ENCODE measurements at regions of chr3 and their contacts with region 1.

Region 1: DNA sequence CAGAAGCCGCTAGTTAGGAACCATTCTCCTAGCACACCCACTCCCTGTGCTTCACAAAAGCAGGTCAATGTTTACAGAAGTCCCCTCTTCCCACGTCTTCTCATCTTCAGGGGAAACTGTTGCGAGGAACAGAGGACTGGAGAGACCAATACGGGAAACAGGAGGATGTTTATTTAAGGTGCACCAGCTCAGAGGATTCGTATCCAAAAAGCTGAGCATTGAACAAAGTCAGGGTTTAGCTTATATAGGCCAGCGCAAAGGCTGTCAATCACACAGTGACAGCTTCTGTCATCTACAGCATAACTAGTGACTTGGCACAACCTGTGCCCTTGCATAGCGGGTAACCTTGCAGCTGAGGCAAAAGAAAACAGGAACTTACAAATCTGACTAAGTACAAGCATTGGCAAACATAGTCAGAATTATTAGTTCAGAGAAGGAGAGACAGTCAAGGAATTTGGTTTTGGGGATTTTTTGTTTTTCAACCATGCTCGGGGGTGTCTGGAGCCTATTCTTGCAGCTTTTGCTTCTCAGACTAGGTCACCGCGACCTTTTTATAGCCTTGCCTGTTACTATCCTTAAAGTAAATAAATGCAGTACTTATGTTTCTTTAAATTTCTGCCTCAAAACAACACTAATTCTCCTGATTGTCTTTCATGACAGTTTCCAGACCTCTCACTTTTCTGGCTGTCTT is 61.2 kb downstream of the ZDHHC19 start:
- DNase-seq: no peak
- H3K4me3 ChIP-seq: no peak overlapping the region
- H3K27ac ChIP-seq: no peak overlapping the region
- H3K4me1 ChIP-seq: peaks cover 2% of the 10 kb centered on the region
- H3K27me3 ChIP-seq: no peaks in the 10 kb centered on the region
- CTCF ChIP-seq: no peak

Region 2: DNA sequence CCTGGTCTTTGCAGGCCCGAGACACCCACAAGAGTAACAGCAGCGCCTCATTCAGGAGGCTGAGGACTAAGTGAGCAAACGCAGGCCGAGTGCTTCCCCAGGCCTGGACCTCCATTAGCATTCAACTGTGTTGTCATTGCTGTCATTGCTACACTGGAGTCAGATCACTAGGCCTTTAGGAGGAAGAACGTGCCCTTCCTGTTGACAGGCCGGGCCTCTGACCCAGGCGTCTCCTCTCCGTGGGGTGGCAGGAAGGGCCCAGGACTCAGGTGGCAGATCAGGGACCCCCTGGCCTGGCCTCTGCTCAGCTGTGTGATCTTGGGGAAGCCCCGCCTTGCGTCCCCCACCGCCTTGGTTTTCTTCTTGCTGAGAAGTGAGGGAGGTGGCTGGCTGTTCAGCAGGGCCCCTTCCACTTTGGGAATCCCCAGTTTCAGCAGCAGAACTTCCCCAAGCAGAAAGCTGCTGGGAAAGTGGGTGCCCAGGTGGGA is 42.1 kb after region 1 on chr3:
- CTCF ChIA-PET with region 1: no interaction called
- dilution Hi-C with region 1: loop called (anchors 5 kb)
- in situ Hi-C with region 1: no loop called
- intact Hi-C with region 1: no loop called
- DNase-seq: no peak
- H3K4me3 ChIP-seq: no peak overlapping the region
- H3K27ac ChIP-seq: no peak overlapping the region
- H3K4me1 ChIP-seq: peaks cover 12% of the 10 kb centered on the region
- H3K27me3 ChIP-seq: no peaks in the 10 kb centered on the region
- CTCF ChIP-seq: no peak

Region 3: DNA sequence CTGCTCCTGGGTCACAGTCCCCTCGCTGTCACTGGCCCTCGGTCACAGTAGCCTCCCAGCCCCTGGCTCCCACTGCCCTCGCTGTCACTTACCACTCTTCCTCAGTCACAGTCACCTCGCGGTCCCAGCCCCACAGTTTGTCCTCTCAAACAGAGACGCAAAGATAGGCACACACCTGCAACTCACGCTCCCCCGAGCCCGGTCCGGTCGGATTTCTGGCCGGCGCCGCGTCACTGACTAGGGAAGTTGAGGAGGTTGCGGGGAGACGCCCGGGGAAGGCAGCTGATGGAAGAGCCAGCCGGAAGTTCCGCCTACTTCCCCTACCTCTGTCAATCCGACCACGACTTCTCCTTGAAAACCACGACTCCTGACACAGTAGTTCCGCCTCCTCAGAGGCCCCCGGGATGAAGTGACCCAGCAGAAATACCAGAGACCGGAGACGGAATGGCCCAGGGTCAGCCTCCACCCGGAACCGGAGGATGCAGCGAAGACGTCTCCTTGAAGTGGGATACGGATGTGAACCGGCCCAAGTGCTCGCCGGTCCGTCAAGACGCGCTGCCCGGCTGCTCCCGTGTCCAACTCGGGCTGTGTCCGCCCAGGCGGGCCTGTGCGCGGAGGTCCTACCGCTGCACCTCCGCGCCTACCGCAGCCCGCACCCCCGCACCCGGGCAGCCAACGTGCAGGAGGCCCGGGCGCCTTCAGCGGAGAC is 137.6 kb after region 1 on chr3 and contains the start of gene PCYT1A:
- CTCF ChIA-PET with region 1: no interaction called
- dilution Hi-C with region 1: no loop called
- in situ Hi-C with region 1: no loop called
- intact Hi-C with region 1: no loop called
- DNase-seq: peak; percentile 96
- H3K4me3 ChIP-seq: peak within 1 kb of the TSS; percentile 69 to 94 (median 87)
- H3K27ac ChIP-seq: peak within 1 kb of the TSS; percentile 90
- H3K4me1 ChIP-seq: peaks cover 13% of the 10 kb centered on the region
- H3K27me3 ChIP-seq: no peaks in the 10 kb centered on the region
- CTCF ChIP-seq: no peak
- total RNA-seq, gene PCYT1A: 103 to 175 TPM